ENCODE measurements at regions of chr3 and their contacts with region 1.

Region 1: GRCh38 chr3:99172736-99173657 is 271.5 kb upstream of the DCBLD2 start:
- DNase-seq: peak; percentile 54
- ATAC-seq: peak; percentile 89
- H3K4me3 ChIP-seq: no peak overlapping the region
- H3K27ac ChIP-seq: no peak overlapping the region
- H3K4me1 ChIP-seq: no peaks in the 10 kb centered on the region
- H3K27me3 ChIP-seq: no peaks in the 10 kb centered on the region
- CTCF ChIP-seq: peak; percentile 77
- EP300 ChIP-seq: no peak
- POLR2A ChIP-seq: no peak
- RAD21 ChIP-seq: no peak

Region 2: DNA sequence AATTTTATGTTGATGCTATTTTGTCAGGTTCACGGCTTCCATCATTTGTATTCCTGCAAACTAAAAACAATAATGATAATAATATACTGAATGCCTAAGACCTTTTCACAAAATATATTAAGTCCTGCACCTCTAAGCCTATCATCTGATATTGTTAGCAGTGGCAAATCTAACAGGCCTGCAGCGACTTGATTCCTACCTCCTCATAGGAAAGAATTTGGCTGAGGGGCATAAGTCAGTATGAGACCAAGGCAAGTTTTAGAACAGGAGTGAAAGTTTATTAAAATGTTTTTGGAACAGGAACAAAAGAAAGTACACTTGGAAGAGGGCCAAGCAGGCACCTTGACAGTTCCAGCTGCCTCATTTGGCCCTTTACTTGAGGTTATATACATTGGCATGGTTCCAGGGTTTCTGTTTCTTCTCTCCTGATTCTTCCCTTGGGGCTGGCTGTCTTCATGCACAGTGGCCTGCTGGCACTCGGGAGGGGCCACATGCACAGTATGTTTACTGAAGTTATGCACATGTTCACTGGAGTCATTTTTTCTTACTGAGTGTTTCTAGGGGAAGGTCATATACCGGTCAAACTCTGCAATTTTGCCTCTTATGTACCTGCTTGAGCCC is 1940.5 kb before region 1 on chr3:
- CTCF ChIA-PET with region 1: no interaction called
- POLR2A ChIA-PET with region 1: no interaction called
- in situ Hi-C with region 1: no loop called
- intact Hi-C with region 1: loop called (anchors 10 kb)
- DNase-seq: no peak
- ATAC-seq: no peak
- H3K4me3 ChIP-seq: no peak overlapping the region
- H3K27ac ChIP-seq: no peak overlapping the region
- H3K4me1 ChIP-seq: no peaks in the 10 kb centered on the region
- H3K27me3 ChIP-seq: no peaks in the 10 kb centered on the region
- CTCF ChIP-seq: no peak
- EP300 ChIP-seq: no peak
- POLR2A ChIP-seq: no peak
- RAD21 ChIP-seq: no peak

Region 3: GRCh38 chr3:99023590-99024192 is 149.3 kb before region 1 on chr3:
- CTCF ChIA-PET with region 1: interaction called, 8 read pairs
- POLR2A ChIA-PET with region 1: no interaction called
- in situ Hi-C with region 1: loop called (anchors 5 kb)
- intact Hi-C with region 1: loop called (anchors 1 kb)
- DNase-seq: peak; percentile 3
- ATAC-seq: no peak
- H3K4me3 ChIP-seq: no peak overlapping the region
- H3K27ac ChIP-seq: no peak overlapping the region
- H3K4me1 ChIP-seq: no peaks in the 10 kb centered on the region
- H3K27me3 ChIP-seq: no peaks in the 10 kb centered on the region
- CTCF ChIP-seq: peak; percentile 63
- EP300 ChIP-seq: no peak
- POLR2A ChIP-seq: no peak
- RAD21 ChIP-seq: no peak

Region 4: DNA sequence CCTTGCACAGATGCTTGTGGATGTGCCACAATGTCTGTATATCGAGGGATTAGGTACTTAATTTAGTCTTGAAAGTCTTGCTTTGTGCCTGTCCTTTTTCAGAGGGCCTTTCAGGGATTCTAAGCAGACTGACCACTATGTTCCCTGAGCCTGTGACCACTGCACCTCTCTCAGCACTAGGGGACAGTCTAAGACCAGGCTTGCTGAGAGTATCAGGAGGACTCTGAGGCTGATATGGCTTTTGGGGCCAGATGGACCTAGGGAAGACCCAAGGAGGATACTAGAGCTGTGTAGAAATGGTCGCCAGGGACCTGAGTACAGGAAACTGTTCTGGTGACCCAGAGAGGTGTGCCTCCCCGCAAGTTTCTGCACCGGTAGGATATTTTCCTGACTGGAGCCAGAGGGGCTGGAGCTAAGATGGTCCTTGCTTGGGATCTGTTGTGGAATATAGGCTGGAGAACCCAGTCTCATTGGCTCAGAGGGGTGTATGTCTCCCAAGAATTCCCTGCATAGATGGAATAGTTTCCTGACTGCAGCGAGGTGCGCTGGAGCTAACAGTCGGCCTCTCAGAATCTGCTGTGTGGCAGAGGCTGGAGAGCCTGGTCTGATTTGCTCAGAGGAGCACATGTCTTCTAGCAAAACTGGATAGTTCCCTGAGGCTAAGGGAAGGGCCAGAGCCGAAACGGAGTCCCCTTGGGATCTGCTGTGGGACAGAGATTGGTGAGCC is 58.3 kb before region 1 on chr3:
- CTCF ChIA-PET with region 1: interaction called, 6 read pairs
- POLR2A ChIA-PET with region 1: no interaction called
- in situ Hi-C with region 1: no loop called
- intact Hi-C with region 1: loop called (anchors 1 kb)
- DNase-seq: peak; percentile 20
- ATAC-seq: peak; percentile 98
- H3K4me3 ChIP-seq: no peak overlapping the region
- H3K27ac ChIP-seq: no peak overlapping the region
- H3K4me1 ChIP-seq: no peaks in the 10 kb centered on the region
- H3K27me3 ChIP-seq: no peaks in the 10 kb centered on the region
- CTCF ChIP-seq: peak; percentile 69
- EP300 ChIP-seq: no peak
- POLR2A ChIP-seq: no peak
- RAD21 ChIP-seq: no peak; the same call in none of the 2 replicates

Region 5: GRCh38 chr3:99286266-99286845 is 113.4 kb after region 1 on chr3:
- CTCF ChIA-PET with region 1: no interaction called
- POLR2A ChIA-PET with region 1: no interaction called
- in situ Hi-C with region 1: no loop called
- intact Hi-C with region 1: no loop called
- DNase-seq: no peak
- ATAC-seq: no peak
- H3K4me3 ChIP-seq: no peak overlapping the region
- H3K27ac ChIP-seq: no peak overlapping the region
- H3K4me1 ChIP-seq: no peaks in the 10 kb centered on the region
- H3K27me3 ChIP-seq: no peaks in the 10 kb centered on the region
- CTCF ChIP-seq: no peak
- EP300 ChIP-seq: no peak
- POLR2A ChIP-seq: no peak
- RAD21 ChIP-seq: no peak

Region 6: GRCh38 chr3:99808151-99808794 is 635.3 kb after region 1 on chr3:
- CTCF ChIA-PET with region 1: no interaction called
- POLR2A ChIA-PET with region 1: no interaction called
- in situ Hi-C with region 1: no loop called
- intact Hi-C with region 1: loop called (anchors 5 kb)
- DNase-seq: peak; percentile 55
- ATAC-seq: peak; percentile 50; the same call in 2 of the 3 replicates
- H3K4me3 ChIP-seq: no peak overlapping the region
- H3K27ac ChIP-seq: no peak overlapping the region
- H3K4me1 ChIP-seq: no peaks in the 10 kb centered on the region
- H3K27me3 ChIP-seq: no peaks in the 10 kb centered on the region
- CTCF ChIP-seq: peak; percentile 70
- EP300 ChIP-seq: no peak
- POLR2A ChIP-seq: no peak
- RAD21 ChIP-seq: no peak